GM10248 (cell line): ENCODE measurements at regions of chr7 and their contacts with region 1.

Region 1: GRCh38 chr7:134660961-134661376 is 14.3 kb downstream of the BPGM start:
- DNase-seq: no peak
- CTCF ChIP-seq: no peak

Region 2: GRCh38 chr7:134440067-134440466 is 220.9 kb before region 1 on chr7:
- CTCF ChIA-PET with region 1: no interaction called
- POLR2A ChIA-PET with region 1: no interaction called
- DNase-seq: no peak
- CTCF ChIP-seq: no peak

Region 3: GRCh38 chr7:134646425-134647305 is 14.3 kb before region 1 on chr7 and contains the start of gene BPGM:
- CTCF ChIA-PET with region 1: interaction called, 15 read pairs
- POLR2A ChIA-PET with region 1: interaction called, 9 read pairs
- DNase-seq: peak; percentile 95
- CTCF ChIP-seq: peak; percentile 48